ENCODE measurements at regions of chr18 and their contacts with region 1.

Region 1: DNA sequence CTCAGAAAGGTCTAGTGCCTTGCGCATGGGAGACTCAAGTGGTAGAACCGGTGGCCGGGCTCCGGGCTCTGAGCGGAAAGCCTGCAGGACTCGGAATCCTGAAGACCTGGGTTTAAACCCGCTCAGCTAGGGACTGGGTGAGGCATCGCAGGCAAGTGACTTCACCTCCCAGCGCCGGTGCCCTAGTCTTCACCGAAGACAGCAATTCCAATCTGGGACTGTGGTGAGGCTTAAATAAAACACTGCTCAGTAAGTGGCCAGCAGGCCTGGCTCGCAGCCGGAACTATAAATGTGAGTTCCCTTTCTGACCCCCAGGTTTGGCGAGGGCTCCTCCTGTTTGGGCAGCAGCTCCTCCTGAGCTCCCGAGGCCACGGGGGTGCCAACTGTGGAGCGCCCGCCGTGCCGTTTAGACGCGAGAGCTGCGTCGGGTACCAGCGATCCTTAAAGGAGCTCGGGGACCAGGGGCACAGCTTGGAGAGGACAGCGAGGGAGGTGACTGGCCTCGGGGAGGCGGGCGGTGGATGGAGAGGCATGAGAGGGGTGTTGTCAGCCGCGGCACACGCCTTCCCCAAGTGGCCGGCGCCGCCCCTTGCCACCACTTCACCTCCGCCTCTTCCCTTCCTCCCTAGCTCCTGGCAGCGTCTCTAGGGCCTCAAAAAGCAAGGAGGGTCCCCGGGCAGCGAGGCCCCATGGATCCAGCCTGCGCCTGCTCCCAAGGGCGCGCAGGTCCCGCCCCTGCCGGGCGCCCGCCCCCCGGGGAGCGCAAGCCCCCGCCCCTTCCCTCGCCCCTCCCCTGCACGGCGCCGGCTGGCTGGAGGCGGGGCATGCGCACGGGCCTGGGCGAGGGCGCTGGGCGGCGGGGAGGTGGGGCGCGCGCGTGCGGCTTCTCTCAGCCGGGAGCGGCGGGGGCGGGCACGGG is 736 bp upstream of the MTCL1 start:
- DNase-seq: peak; percentile 87
- H3K4me3 ChIP-seq: peak overlapping the region; percentile 52 to 79 (median 66)
- H3K27ac ChIP-seq: peak overlapping the region; percentile 66
- H3K4me1 ChIP-seq: peaks cover 17% of the 10 kb centered on the region
- H3K27me3 ChIP-seq: no peaks in the 10 kb centered on the region
- CTCF ChIP-seq: no peak
- POLR2A ChIP-seq: peak; percentile 41

Region 2: DNA sequence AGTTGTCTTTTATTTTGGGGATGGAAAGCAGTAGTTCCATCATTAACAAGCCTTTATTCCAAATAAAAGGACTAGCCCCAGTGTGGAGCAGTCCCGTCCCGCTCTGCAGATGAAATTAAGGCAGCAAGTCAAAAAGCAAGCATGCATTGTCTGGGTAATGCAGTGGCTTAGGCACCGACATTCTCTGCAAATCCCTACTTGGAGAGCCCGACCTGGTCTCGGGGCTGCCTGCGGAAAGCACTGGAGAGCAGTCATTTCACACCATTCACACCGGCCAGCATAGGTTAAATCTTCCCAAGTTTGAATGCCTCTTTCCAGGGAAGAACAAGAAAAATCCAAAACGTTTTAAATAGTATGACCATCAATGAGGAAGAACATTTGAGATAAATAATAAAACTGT is 119.8 kb before region 1 on chr18:
- CTCF ChIA-PET with region 1: no interaction called
- POLR2A ChIA-PET with region 1: no interaction called
- dilution Hi-C with region 1: no loop called
- intact Hi-C with region 1: no loop called
- DNase-seq: no peak
- H3K4me3 ChIP-seq: no peak overlapping the region
- H3K27ac ChIP-seq: no peak overlapping the region
- H3K4me1 ChIP-seq: no peaks in the 10 kb centered on the region
- H3K27me3 ChIP-seq: peaks cover 2% of the 10 kb centered on the region in 2 experiments
- CTCF ChIP-seq: no peak
- POLR2A ChIP-seq: no peak

Region 3: DNA sequence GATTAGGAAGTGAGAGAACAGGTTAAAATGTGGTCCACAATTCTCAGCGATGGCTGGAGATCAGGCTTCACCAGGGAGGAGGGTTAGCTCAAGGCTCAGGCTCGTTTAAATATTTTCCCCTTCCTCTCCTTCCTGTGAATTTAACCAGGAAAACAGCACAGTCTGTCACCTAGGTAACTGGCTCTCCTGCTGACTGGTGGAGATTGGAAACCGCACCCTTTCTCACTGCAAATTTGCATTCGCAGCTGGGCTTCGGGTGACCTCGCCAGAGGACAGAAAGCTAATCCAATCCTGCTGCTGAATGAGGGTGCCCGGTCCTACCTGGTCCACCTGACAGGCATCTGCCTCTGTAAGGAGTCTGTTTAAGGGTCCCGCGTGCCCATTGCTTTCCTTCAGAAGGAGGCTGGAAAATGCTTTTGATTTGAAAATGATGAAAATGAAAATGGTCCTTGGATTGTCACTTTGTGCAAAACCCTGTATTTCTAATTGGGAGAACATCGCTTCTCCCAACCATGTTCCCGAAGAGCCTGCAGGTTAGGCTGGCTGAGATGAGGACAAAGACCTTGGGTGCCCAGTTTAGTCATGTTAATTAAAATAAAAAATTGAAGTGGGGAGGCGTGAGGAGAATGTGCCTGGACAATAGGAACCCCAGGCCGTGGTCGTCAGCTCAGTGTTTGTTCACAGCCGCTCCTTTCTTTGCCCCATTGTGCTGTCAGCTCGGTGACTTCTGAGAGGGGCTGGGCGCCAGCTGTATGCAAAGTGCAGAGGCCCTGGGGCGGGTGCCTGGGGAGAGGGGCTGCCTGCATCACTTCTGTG is 42.7 kb before region 1 on chr18:
- CTCF ChIA-PET with region 1: interaction called, 3 read pairs
- POLR2A ChIA-PET with region 1: no interaction called
- dilution Hi-C with region 1: no loop called
- intact Hi-C with region 1: loop called (anchors 2 kb)
- DNase-seq: peak; percentile 68
- H3K4me3 ChIP-seq: peak overlapping the region in 1 of 3 experiments; percentile 23
- H3K27ac ChIP-seq: peak overlapping the region; percentile 37
- H3K4me1 ChIP-seq: peaks cover 26% of the 10 kb centered on the region
- H3K27me3 ChIP-seq: no peaks in the 10 kb centered on the region
- CTCF ChIP-seq: no peak
- POLR2A ChIP-seq: no peak

Region 4: GRCh38 chr18:8685141-8685913 is 19.3 kb before region 1 on chr18:
- CTCF ChIA-PET with region 1: no interaction called
- POLR2A ChIA-PET with region 1: no interaction called
- dilution Hi-C with region 1: no loop called
- intact Hi-C with region 1: no loop called
- DNase-seq: no peak
- H3K4me3 ChIP-seq: no peak overlapping the region
- H3K27ac ChIP-seq: no peak overlapping the region
- H3K4me1 ChIP-seq: no peaks in the 10 kb centered on the region
- H3K27me3 ChIP-seq: no peaks in the 10 kb centered on the region
- CTCF ChIP-seq: no peak
- POLR2A ChIP-seq: no peak

Region 5: GRCh38 chr18:8730080-8730827 is 25.6 kb after region 1 on chr18:
- CTCF ChIA-PET with region 1: interaction called, 21 read pairs
- POLR2A ChIA-PET with region 1: no interaction called
- dilution Hi-C with region 1: no loop called
- intact Hi-C with region 1: loop called (anchors 1 kb)
- DNase-seq: peak; percentile 95
- H3K4me3 ChIP-seq: no peak overlapping the region
- H3K27ac ChIP-seq: peak overlapping the region; percentile 99
- H3K4me1 ChIP-seq: peaks cover 28% of the 10 kb centered on the region
- H3K27me3 ChIP-seq: no peaks in the 10 kb centered on the region
- CTCF ChIP-seq: no peak
- POLR2A ChIP-seq: peak; percentile 73

Region 6: GRCh38 chr18:8750954-8751415 is 46.4 kb after region 1 on chr18:
- CTCF ChIA-PET with region 1: interaction called, 6 read pairs
- POLR2A ChIA-PET with region 1: interaction called, 5 read pairs
- dilution Hi-C with region 1: no loop called
- intact Hi-C with region 1: loop called (anchors 1 kb)
- DNase-seq: peak; percentile 81
- H3K4me3 ChIP-seq: no peak overlapping the region
- H3K27ac ChIP-seq: peak overlapping the region; percentile 50
- H3K4me1 ChIP-seq: peaks cover 39% of the 10 kb centered on the region
- H3K27me3 ChIP-seq: no peaks in the 10 kb centered on the region
- CTCF ChIP-seq: no peak
- POLR2A ChIP-seq: no peak

Region 7: GRCh38 chr18:8800449-8800848 is 95.8 kb after region 1 on chr18:
- CTCF ChIA-PET with region 1: interaction called, 20 read pairs
- POLR2A ChIA-PET with region 1: no interaction called
- dilution Hi-C with region 1: no loop called
- intact Hi-C with region 1: loop called (anchors 1 kb)
- DNase-seq: peak; percentile 24
- H3K4me3 ChIP-seq: no peak overlapping the region
- H3K27ac ChIP-seq: peak overlapping the region; percentile 94
- H3K4me1 ChIP-seq: peaks cover 46% of the 10 kb centered on the region
- H3K27me3 ChIP-seq: no peaks in the 10 kb centered on the region
- CTCF ChIP-seq: no peak
- POLR2A ChIP-seq: no peak

Region 8: DNA sequence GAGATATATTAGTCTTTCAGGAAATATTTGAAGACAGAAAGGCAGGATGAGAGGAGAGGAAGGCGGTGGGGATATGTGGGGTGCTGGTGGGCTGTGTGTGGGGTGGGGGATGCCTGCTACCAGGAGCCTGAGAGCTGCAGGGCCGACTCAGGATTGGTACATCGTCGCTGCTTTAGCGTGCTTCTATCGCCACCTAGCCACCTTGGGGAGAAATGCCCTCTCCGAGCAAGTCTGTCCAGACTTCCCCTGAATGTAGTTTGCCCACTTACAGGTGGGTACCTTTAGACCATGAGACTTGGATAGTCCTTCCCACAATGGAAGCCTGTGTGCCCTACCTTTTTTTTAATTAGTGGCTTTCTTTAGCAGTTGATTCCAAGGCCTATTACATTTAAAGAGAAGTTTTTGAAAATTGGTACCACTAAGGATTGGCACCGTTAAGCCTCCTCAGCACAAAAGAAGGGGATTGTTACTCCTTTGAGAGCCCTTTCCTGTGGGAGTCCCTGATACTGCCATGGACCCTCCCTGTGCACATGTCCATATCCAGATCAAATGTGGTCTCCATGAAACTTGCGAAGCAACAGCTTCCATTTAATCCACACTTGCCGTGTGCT is 283.7 kb after region 1 on chr18:
- CTCF ChIA-PET with region 1: interaction called, 17 read pairs
- POLR2A ChIA-PET with region 1: no interaction called
- dilution Hi-C with region 1: no loop called
- intact Hi-C with region 1: no loop called
- DNase-seq: peak; percentile 62
- H3K4me3 ChIP-seq: no peak overlapping the region
- H3K27ac ChIP-seq: no peak overlapping the region
- H3K4me1 ChIP-seq: no peaks in the 10 kb centered on the region
- H3K27me3 ChIP-seq: no peaks in the 10 kb centered on the region
- CTCF ChIP-seq: peak; percentile 78 to 87
- POLR2A ChIP-seq: no peak

Region 9: GRCh38 chr18:9404565-9405060 is 700.0 kb after region 1 on chr18:
- CTCF ChIA-PET with region 1: no interaction called
- POLR2A ChIA-PET with region 1: no interaction called
- dilution Hi-C with region 1: no loop called
- intact Hi-C with region 1: loop called (anchors 10 kb)
- DNase-seq: peak; percentile 94
- H3K4me3 ChIP-seq: peak overlapping the region in 1 of 3 experiments; percentile 10
- H3K27ac ChIP-seq: peak overlapping the region; percentile 99
- H3K4me1 ChIP-seq: peaks cover 37% of the 10 kb centered on the region
- H3K27me3 ChIP-seq: no peaks in the 10 kb centered on the region
- CTCF ChIP-seq: no peak
- POLR2A ChIP-seq: peak; percentile 69

Measured in endothelial cell of umbilical vein (primary cell).